CD14-positive monocyte (primary cell): ENCODE measurements at regions of chr3 and their contacts with region 1.

Region 1: DNA sequence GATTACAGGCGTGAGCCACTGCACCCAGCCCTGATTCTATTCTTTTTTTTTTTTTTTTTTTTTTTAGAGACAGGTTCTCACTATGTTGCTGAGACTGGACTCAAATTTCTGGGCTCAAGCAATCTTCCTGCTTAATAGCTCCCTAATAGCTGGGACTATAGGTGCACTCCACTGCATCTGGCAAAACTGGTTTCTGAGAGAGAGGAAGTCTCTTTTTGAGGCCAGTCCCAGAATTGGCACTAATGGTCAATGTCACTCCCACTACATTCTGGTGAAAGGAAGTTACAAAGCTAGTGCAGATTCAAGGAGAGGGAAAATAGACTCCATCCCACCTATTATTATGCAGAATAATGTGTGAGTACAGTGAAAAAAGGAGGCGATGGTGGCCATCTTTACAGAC is 5.8 kb upstream of the TGFBR2 start:
- DNase-seq: no peak
- H3K4me3 ChIP-seq: no peak overlapping the region
- H3K4me3 Mint-ChIP-seq: no peak overlapping the region
- H3K27ac ChIP-seq: no peak overlapping the region
- H3K27ac Mint-ChIP-seq: no peak overlapping the region
- H3K4me1 ChIP-seq: peaks cover 35 to 52% of the 10 kb centered on the region in 2 donors
- H3K4me1 Mint-ChIP-seq: peaks cover 48% of the 10 kb centered on the region
- H3K27me3 ChIP-seq: no peaks in the 10 kb centered on the region
- H3K27me3 Mint-ChIP-seq: no peaks in the 10 kb centered on the region
- CTCF ChIP-seq: no peak

Region 2: DNA sequence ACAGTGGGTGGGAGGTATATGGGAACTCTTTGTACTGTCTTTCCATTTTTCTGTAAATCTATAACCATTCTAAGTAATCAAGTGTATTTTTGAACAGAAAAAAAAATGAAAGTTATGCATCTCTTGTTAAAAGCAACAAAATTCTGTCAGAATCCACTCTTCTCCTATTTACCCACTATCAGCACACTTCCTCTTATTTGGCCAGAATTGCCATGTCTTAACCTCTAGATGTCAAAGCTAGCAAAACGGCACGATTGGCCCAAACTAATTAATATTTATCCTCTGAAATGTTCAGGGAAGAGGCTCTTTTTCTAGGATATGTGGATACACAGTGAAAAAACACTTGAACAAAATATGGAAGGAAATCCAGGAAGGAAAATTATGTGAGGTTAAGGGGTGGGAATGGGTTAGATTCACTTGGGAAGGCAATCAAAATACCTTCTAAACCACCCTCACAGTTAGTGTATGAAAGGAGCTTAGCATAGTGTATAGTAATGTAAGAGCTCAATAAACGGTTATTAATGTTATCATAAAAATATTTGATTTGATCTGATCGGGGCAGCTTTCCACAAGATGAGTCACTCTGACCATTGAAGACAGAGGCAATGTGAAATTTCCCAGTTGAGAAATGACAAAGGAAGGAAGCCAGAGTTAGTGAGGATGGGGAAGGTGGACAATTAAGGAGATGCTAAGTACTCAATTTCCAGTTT is 14.3 kb before region 1 on chr3:
- intact Hi-C with region 1: loop called in 1 of 2 experiments (anchors 2 kb)
- DNase-seq: peak; percentile 16 to 38 (median 32)
- H3K4me3 ChIP-seq: no peak overlapping the region
- H3K4me3 Mint-ChIP-seq: no peak overlapping the region
- H3K27ac ChIP-seq: no peak overlapping the region
- H3K27ac Mint-ChIP-seq: no peak overlapping the region
- H3K4me1 ChIP-seq: peaks cover 0 to 12% of the 10 kb centered on the region in 2 donors
- H3K4me1 Mint-ChIP-seq: peaks cover 10% of the 10 kb centered on the region
- H3K27me3 ChIP-seq: no peaks in the 10 kb centered on the region
- H3K27me3 Mint-ChIP-seq: peaks cover 0 to 2% (median 0%) of the 10 kb centered on the region in 3 donors
- CTCF ChIP-seq: no peak